GM12878 (cell line): ENCODE measurements at regions of chr2 and their contacts with region 1.

Region 1: GRCh38 chr2:170235860-170236679 is 58.1 kb downstream of the MYO3B start:
- DNase-seq: no peak
- ATAC-seq: peak; percentile 88
- H3K4me3 ChIP-seq: no peak overlapping the region
- H3K27ac ChIP-seq: no peak overlapping the region
- H3K4me1 ChIP-seq: no peaks in the 10 kb centered on the region
- H3K27me3 ChIP-seq: no peaks in the 10 kb centered on the region
- CTCF ChIP-seq: peak; percentile 62 to 68 (median 65)
- EP300 ChIP-seq: no peak
- POLR2A ChIP-seq: no peak
- RAD21 ChIP-seq: peak; percentile 91

Region 2: DNA sequence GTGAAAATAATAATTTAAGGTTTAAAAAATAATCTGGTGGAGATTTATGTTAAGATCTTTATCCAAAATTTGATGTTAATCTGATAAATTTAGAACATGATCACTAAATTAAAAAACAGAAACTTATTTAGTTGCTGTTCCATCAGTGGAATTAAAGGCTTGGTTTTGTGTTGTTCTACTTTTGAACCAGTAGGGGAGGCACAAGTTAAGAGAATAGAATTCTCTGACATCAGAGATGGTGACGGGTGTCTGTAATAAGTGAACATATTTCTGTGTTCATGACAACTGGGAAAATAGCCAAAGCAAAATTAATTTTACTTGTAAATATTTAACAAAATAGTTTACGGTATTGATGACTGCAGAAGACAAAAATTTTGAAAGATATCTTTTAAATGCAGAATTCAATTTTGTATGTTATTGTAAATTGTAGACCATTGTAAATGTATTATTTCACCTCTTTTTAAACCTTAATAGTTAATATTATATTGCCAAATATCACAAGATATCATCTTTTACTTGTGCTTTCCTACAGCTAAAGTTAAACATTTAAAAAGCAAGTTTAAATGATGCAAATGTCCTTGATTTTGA is 302.9 kb before region 1 on chr2:
- CTCF ChIA-PET with region 1: interaction called, 10 read pairs
- POLR2A ChIA-PET with region 1: no interaction called
- RAD21 ChIA-PET with region 1: interaction called, 4 read pairs
- SMC1A ChIA-PET with region 1: interaction called, 19 read pairs
- in situ Hi-C with region 1: no loop called
- intact Hi-C with region 1: loop called (anchors 2 kb)
- DNase-seq: no peak
- ATAC-seq: peak; percentile 82
- H3K4me3 ChIP-seq: no peak overlapping the region
- H3K27ac ChIP-seq: no peak overlapping the region
- H3K4me1 ChIP-seq: no peaks in the 10 kb centered on the region
- H3K27me3 ChIP-seq: no peaks in the 10 kb centered on the region
- CTCF ChIP-seq: peak; percentile 67 to 79 (median 70)
- EP300 ChIP-seq: no peak
- POLR2A ChIP-seq: no peak
- RAD21 ChIP-seq: peak; percentile 92

Region 3: GRCh38 chr2:170155022-170155722 is 80.9 kb before region 1 on chr2:
- CTCF ChIA-PET with region 1: interaction called, 4 read pairs
- POLR2A ChIA-PET with region 1: interaction called, 4 read pairs
- RAD21 ChIA-PET with region 1: interaction called, 7 read pairs
- SMC1A ChIA-PET with region 1: interaction called, 14 read pairs
- in situ Hi-C with region 1: no loop called
- intact Hi-C with region 1: no loop called
- DNase-seq: no peak
- ATAC-seq: peak; percentile 73
- H3K4me3 ChIP-seq: no peak overlapping the region; the same call in 1 of the 2 replicates
- H3K27ac ChIP-seq: no peak overlapping the region
- H3K4me1 ChIP-seq: peaks cover 54% of the 10 kb centered on the region
- H3K27me3 ChIP-seq: no peaks in the 10 kb centered on the region
- CTCF ChIP-seq: no peak
- EP300 ChIP-seq: peak in 1 of 2 experiments; percentile 75; a peak in 1 of 4 replicates
- POLR2A ChIP-seq: no peak
- RAD21 ChIP-seq: no peak

Region 4: DNA sequence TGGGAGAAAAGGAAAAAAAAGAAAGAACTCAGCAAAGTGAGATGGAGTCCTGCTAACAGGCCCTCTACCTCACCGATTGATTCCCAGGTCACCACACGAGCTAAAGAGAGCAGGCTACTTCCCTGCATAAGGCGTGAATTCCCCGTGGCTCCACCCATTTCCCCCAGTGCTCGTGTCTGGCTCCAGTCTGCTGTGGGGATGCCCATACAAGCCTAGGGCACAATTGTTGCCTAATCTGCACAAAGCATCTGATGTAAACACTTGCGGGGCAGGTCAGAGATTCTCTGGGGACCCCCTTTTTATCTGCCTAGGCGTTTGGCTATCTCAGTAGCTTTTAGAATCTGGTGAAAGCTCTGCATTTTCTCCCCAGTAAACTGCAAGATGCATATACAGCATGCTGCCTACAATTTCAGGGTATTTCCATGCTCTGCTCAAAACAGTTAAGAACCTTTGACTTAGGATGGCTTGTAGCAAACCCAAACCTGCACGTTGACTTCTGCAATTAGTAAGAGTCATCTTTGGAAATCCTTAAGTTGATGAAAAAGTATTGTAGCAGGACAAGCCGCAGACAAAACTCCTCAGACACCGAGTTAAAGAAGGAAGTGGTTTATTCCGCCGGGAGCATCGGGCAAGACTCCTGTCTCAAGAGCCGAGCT is 23.3 kb before region 1 on chr2:
- CTCF ChIA-PET with region 1: interaction called, 5 read pairs
- POLR2A ChIA-PET with region 1: interaction called, 8 read pairs
- RAD21 ChIA-PET with region 1: interaction called, 20 read pairs
- SMC1A ChIA-PET with region 1: interaction called, 22 read pairs
- in situ Hi-C with region 1: no loop called
- intact Hi-C with region 1: no loop called
- DNase-seq: peak; percentile 64
- ATAC-seq: peak; percentile 72
- H3K4me3 ChIP-seq: peak overlapping the region; percentile 42
- H3K27ac ChIP-seq: peak overlapping the region; percentile 51
- H3K4me1 ChIP-seq: peaks cover 24% of the 10 kb centered on the region
- H3K27me3 ChIP-seq: no peaks in the 10 kb centered on the region
- CTCF ChIP-seq: no peak
- EP300 ChIP-seq: no peak
- POLR2A ChIP-seq: no peak
- RAD21 ChIP-seq: no peak

Region 5: DNA sequence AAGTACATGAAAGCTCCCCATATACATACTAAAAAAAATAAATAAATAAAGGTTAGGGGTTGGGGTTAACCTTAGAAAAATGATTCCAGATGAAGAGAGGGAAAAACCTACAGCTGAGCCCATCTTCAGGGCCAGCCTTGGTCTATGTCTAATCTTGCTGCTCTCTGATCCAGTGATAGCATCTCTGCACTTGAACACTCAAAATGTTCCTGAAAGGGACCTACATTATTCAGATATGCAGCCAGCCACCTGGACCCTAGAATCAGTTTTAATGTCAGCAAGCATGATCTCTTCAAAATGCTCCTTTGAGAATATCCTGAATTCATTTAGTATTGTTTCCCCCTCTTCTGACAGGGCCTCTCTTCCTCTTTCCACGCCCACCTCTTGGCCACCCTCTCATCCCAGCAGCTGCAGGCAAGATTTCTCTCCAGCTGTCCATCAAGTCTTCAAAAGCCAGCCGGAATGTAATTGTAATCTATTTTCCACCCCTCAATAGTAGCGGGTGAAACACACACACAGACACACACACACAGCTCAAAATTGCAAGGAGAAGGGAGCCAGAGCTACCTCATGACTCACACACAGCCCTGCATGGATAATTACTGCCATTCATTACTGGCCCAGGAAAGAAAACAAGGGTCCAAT is 77.4 kb after region 1 on chr2:
- CTCF ChIA-PET with region 1: interaction called, 12 read pairs
- POLR2A ChIA-PET with region 1: no interaction called
- RAD21 ChIA-PET with region 1: interaction called, 4 read pairs
- SMC1A ChIA-PET with region 1: interaction called, 6 read pairs
- in situ Hi-C with region 1: no loop called
- intact Hi-C with region 1: no loop called
- DNase-seq: no peak
- ATAC-seq: no peak
- H3K4me3 ChIP-seq: no peak overlapping the region
- H3K27ac ChIP-seq: no peak overlapping the region
- H3K4me1 ChIP-seq: no peaks in the 10 kb centered on the region
- H3K27me3 ChIP-seq: no peaks in the 10 kb centered on the region
- CTCF ChIP-seq: no peak
- EP300 ChIP-seq: no peak
- POLR2A ChIP-seq: no peak
- RAD21 ChIP-seq: no peak

Region 6: DNA sequence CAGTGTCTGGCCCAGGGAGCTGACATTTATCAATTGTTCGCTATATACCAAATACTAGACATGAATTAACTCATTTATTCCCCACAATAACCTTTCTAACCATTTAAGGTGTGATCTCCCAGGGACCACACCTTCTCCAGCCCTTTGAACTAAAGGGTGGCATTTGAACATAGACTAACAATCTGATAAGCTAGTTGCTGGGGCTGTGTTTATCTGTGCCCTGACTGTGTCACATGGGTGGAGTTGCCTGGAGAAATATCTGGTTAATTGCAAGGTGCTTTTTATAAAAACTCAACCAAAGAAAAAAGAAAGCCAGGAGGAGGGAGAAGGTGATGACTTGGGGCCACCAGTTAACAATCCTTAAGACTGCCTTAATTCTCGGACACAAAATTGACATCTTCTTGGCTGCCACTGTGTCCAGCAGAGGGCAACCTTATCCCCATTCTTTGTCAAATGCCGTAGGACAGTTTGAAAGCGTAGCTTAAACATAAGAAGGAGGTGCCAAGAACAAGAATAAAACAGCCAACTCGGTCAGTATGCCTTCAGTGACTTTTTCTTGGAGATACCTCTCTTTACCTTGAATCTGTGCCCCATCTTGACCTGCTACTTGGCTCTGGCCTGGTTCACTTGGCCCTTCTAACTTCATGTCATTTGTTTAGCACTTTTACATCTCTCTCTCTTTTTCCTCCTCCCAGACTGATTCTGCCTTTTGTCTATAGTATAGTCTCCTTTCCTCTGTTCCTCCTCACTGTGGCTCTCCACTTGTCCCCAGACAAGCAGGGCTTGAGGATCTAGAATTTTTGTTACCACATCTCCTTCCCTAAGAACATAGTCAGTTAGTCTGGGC is 125.2 kb after region 1 on chr2:
- CTCF ChIA-PET with region 1: interaction called, 36 read pairs
- POLR2A ChIA-PET with region 1: no interaction called
- RAD21 ChIA-PET with region 1: interaction called, 15 read pairs
- SMC1A ChIA-PET with region 1: interaction called, 18 read pairs
- in situ Hi-C with region 1: loop called (anchors 5 kb)
- intact Hi-C with region 1: loop called (anchors 2 kb)
- DNase-seq: peak; percentile 26
- ATAC-seq: peak; percentile 97
- H3K4me3 ChIP-seq: no peak overlapping the region
- H3K27ac ChIP-seq: no peak overlapping the region
- H3K4me1 ChIP-seq: no peaks in the 10 kb centered on the region
- H3K27me3 ChIP-seq: no peaks in the 10 kb centered on the region
- CTCF ChIP-seq: peak; percentile 76 to 87 (median 80)
- EP300 ChIP-seq: no peak
- POLR2A ChIP-seq: no peak
- RAD21 ChIP-seq: peak; percentile 65

Region 7: DNA sequence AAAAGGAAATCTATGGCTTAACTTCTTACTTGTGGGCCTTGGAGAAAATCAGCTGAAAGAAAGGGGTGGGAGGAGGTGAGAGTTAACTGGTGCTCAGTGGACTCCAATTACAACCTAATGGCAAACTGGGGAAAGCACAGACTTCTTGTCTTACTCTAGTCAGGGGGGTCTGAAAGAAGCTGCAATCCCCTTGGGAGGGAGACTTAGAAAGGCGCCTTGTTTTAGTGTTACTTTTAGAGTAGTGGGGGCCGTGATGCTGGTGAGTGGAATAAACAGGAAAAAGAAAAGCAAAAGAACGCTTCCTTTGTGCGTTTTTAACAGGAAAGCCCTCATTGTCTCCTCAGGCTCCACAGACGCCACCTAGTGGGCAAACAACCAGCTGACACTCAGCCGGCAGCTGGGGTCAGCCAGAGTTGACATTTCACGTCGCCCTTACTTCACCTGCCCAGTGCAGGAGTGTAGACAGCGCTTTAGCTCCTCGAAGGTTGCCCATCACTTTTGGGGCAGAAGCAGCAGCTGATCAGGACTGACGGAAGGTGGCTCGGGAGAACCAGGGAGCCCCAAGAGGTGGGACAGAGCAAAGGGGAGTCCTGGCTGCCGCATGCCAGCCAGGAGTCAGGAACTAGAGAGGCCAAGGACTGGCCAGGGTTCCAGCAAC is 637.1 kb after region 1 on chr2:
- CTCF ChIA-PET with region 1: interaction called, 5 read pairs
- POLR2A ChIA-PET with region 1: no interaction called
- RAD21 ChIA-PET with region 1: no interaction called
- SMC1A ChIA-PET with region 1: interaction called, 6 read pairs
- in situ Hi-C with region 1: no loop called
- intact Hi-C with region 1: loop called (anchors 10 kb)
- DNase-seq: peak; percentile 24
- ATAC-seq: peak; percentile 99
- H3K4me3 ChIP-seq: peak overlapping the region; percentile 49; the same call in 1 of the 2 replicates
- H3K27ac ChIP-seq: no peak overlapping the region
- H3K4me1 ChIP-seq: no peaks in the 10 kb centered on the region
- H3K27me3 ChIP-seq: no peaks in the 10 kb centered on the region
- CTCF ChIP-seq: peak; percentile 85 to 98 (median 94)
- EP300 ChIP-seq: no peak
- POLR2A ChIP-seq: no peak
- RAD21 ChIP-seq: peak; percentile 66